CD4-positive, alpha-beta T cell (primary cell): ENCODE measurements at regions of chr14 and their contacts with region 1.

Region 1: GRCh38 chr14:70640938-70641547 is 673 bp upstream of the TTC9 start:
- DNase-seq: peak in 13 of 14 experiments; percentile 29 to 79 (median 57)
- ATAC-seq: peak; percentile 69
- H3K4me3 ChIP-seq: peak overlapping the region; percentile 57
- H3K4me3 Mint-ChIP-seq: peak overlapping the region; percentile 98
- H3K27ac ChIP-seq: peak overlapping the region; percentile 32 to 71
- H3K27ac Mint-ChIP-seq: peak overlapping the region; percentile 98
- H3K4me1 ChIP-seq: peaks cover 39% of the 10 kb centered on the region
- H3K4me1 Mint-ChIP-seq: peaks cover 58% of the 10 kb centered on the region
- H3K27me3 ChIP-seq: no peaks in the 10 kb centered on the region
- H3K27me3 Mint-ChIP-seq: no peaks in the 10 kb centered on the region
- CTCF ChIP-seq: no peak

Region 2: GRCh38 chr14:70555890-70556289 is 85.2 kb before region 1 on chr14:
- CTCF ChIA-PET with region 1: no interaction called
- POLR2A ChIA-PET with region 1: no interaction called
- intact Hi-C with region 1: no loop called
- DNase-seq: peak in 1 of 14 experiments; percentile 4
- ATAC-seq: no peak
- H3K4me3 ChIP-seq: no peak overlapping the region
- H3K4me3 Mint-ChIP-seq: no peak overlapping the region
- H3K27ac ChIP-seq: no peak overlapping the region
- H3K27ac Mint-ChIP-seq: no peak overlapping the region
- H3K4me1 ChIP-seq: no peaks in the 10 kb centered on the region
- H3K4me1 Mint-ChIP-seq: peaks cover 5% of the 10 kb centered on the region
- H3K27me3 ChIP-seq: no peaks in the 10 kb centered on the region
- H3K27me3 Mint-ChIP-seq: no peaks in the 10 kb centered on the region
- CTCF ChIP-seq: no peak

Region 3: DNA sequence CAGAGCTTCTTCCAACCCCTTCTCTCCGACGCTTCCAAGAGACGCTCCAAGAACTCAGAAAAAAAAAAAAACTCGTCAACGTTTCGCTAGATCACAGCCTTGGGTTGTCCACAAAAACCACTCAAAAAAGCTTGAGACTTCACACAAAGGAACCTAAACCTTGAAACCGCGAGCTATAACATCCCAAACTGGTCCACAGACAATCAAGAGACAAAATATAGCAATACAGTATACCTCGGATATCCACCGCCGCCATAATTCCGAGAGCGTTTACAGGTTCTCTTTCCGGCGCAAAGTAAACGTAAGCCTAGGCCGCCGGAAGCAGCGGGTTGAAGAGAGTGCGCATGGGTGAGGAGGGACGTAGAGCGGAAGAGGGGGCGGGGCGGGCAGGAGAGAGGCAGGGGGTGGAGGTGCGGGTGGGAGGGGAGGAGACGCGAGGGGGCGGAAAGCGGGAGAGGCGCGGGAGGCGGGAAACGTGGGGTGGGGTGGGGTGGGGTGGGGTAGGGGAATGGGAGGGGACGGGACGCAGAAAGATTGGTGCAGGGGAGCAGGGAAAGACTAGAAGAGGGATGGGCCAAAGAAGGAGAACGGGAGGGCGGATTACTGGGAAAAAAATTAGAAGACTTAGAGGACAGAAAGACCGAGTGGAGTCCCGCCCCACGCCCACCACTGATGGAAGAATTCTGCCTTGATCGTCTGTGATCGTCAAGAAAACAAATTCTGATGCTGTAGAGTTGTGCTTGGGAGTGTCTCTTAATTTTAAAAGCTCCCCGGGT is 40.5 kb before region 1 on chr14 and contains the start of gene MED6:
- CTCF ChIA-PET with region 1: no interaction called
- POLR2A ChIA-PET with region 1: interaction called, 3 read pairs
- intact Hi-C with region 1: loop called (anchors 5 kb)
- DNase-seq: peak; percentile 83 to 97 (median 91)
- ATAC-seq: peak; percentile 99
- H3K4me3 ChIP-seq: peak within 1 kb of the TSS; percentile 97
- H3K4me3 Mint-ChIP-seq: peak within 1 kb of the TSS; percentile 100
- H3K27ac ChIP-seq: peak within 1 kb of the TSS; percentile 79 to 92
- H3K27ac Mint-ChIP-seq: peak within 1 kb of the TSS; percentile 99
- H3K4me1 ChIP-seq: peaks cover 15% of the 10 kb centered on the region
- H3K4me1 Mint-ChIP-seq: peaks cover 37% of the 10 kb centered on the region
- H3K27me3 ChIP-seq: no peaks in the 10 kb centered on the region
- H3K27me3 Mint-ChIP-seq: peaks cover 5% of the 10 kb centered on the region
- CTCF ChIP-seq: no peak
- total RNA-seq, gene MED6: 90.2 to 97.2 TPM

Region 4: GRCh38 chr14:70655110-70655826 is 14.2 kb after region 1 on chr14:
- CTCF ChIA-PET with region 1: interaction called, 18 read pairs
- POLR2A ChIA-PET with region 1: interaction called, 182 read pairs
- intact Hi-C with region 1: loop called (anchors 1 to 2 kb)
- DNase-seq: peak; percentile 48 to 94 (median 70)
- ATAC-seq: peak; percentile 91
- H3K4me3 ChIP-seq: peak overlapping the region; percentile 42
- H3K4me3 Mint-ChIP-seq: peak overlapping the region; percentile 80
- H3K27ac ChIP-seq: peak overlapping the region; percentile 93 to 94
- H3K27ac Mint-ChIP-seq: peak overlapping the region; percentile 95
- H3K4me1 ChIP-seq: peaks cover 85% of the 10 kb centered on the region
- H3K4me1 Mint-ChIP-seq: peaks cover 94% of the 10 kb centered on the region
- H3K27me3 ChIP-seq: no peaks in the 10 kb centered on the region
- H3K27me3 Mint-ChIP-seq: no peaks in the 10 kb centered on the region
- CTCF ChIP-seq: no peak

Region 5: GRCh38 chr14:70677341-70677740 is 36.3 kb after region 1 on chr14:
- CTCF ChIA-PET with region 1: no interaction called
- POLR2A ChIA-PET with region 1: no interaction called
- intact Hi-C with region 1: loop called in 1 of 2 experiments (anchors 5 kb)
- DNase-seq: no peak
- ATAC-seq: no peak
- H3K4me3 ChIP-seq: no peak overlapping the region
- H3K4me3 Mint-ChIP-seq: no peak overlapping the region
- H3K27ac ChIP-seq: no peak overlapping the region
- H3K27ac Mint-ChIP-seq: no peak overlapping the region
- H3K4me1 ChIP-seq: no peaks in the 10 kb centered on the region
- H3K4me1 Mint-ChIP-seq: peaks cover 9% of the 10 kb centered on the region
- H3K27me3 ChIP-seq: no peaks in the 10 kb centered on the region
- H3K27me3 Mint-ChIP-seq: no peaks in the 10 kb centered on the region
- CTCF ChIP-seq: no peak

Region 6: DNA sequence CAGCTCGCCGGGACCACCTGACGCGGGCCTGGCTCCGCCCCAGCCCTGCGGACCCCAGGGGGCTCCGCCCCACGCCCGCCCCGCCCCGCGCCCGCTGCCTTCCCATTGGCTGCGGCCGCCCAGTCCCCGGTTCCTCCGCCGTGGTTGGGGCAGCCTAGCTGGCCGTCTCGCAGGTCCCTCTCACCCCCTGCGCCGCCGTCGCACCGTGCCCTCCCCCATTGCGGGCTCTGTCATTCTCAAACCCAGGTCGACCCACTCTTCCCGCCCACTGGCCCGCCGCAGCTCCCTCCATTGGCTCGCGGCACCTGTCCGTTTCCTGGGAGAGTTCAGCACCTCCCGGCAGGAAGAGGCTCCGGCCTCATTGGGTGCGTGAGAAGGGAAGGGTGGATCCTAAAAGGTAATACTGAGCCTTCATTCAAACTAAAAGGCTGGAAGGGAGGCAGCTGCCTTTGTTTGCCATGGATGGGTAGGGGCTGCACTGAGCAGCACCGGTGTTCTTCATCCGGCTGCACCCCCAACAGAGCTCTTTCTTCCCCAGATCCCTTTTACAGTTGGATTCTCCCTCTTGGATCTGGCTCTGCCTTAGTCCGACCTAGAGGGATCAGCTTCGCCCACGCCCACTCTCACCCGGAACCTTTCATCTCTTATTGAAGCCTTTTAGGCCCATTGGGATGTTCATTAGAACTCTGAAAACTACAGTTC is 168.7 kb after region 1 on chr14:
- CTCF ChIA-PET with region 1: no interaction called
- POLR2A ChIA-PET with region 1: interaction called, 13 read pairs
- intact Hi-C with region 1: loop called in 1 of 2 experiments (anchors 10 kb)
- DNase-seq: peak; percentile 69 to 94 (median 84)
- ATAC-seq: peak; percentile 74
- H3K4me3 ChIP-seq: peak overlapping the region; percentile 74
- H3K4me3 Mint-ChIP-seq: no peak overlapping the region
- H3K27ac ChIP-seq: peak overlapping the region in 1 of 2 donors; percentile 31
- H3K27ac Mint-ChIP-seq: no peak overlapping the region
- H3K4me1 ChIP-seq: peaks cover 15% of the 10 kb centered on the region
- H3K4me1 Mint-ChIP-seq: peaks cover 10% of the 10 kb centered on the region
- H3K27me3 ChIP-seq: no peaks in the 10 kb centered on the region
- H3K27me3 Mint-ChIP-seq: no peaks in the 10 kb centered on the region
- CTCF ChIP-seq: no peak

Region 7: DNA sequence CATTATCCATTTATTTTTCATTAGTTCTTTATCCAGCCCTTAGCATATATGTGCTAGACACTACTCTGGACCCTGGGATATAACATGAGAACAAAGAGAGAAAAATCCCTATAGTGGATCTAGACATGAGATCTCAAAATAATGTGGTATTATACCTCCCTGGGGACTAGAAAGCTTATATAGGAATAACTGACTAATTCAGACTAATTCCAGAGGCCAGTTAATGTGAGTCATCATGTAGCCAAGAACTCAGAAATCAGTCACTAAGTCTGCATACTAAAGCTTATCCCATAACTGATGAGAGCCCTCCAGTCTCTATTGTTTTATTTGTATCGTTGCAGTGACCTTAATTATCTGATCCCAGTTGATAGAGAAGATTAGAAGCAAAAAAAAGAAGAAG is 1024.1 kb after region 1 on chr14:
- CTCF ChIA-PET with region 1: no interaction called
- POLR2A ChIA-PET with region 1: no interaction called
- intact Hi-C with region 1: no loop called
- DNase-seq: no peak
- ATAC-seq: no peak
- H3K4me3 ChIP-seq: no peak overlapping the region
- H3K4me3 Mint-ChIP-seq: no peak overlapping the region
- H3K27ac ChIP-seq: no peak overlapping the region
- H3K27ac Mint-ChIP-seq: no peak overlapping the region
- H3K4me1 ChIP-seq: no peaks in the 10 kb centered on the region
- H3K4me1 Mint-ChIP-seq: no peaks in the 10 kb centered on the region
- H3K27me3 ChIP-seq: no peaks in the 10 kb centered on the region
- H3K27me3 Mint-ChIP-seq: no peaks in the 10 kb centered on the region
- CTCF ChIP-seq: no peak